Left ventricle myocardium superior (tissue), 1 donor: ENCODE measurements at regions of chr7 and their contacts with region 1.

Region 1: DNA sequence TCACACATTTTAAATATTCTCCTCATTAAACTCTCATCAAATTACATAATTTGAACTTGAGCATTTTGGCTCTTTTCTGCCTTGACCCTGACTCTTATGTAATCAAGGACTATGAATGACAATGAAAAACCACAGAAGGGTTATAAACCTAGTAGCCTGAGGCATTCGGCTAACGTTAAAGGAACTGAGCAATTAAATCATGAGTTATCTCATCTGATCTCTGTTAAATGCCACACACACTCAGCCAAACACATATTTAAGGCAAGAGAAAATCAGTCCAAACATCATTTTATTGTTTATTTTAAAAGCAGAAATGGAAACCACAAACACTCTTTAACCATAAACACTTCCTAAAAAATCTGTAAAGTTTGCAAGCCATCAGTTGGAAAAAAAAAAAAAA is 204.3 kb downstream of the DGKI start:
- DNase-seq: no peak
- ATAC-seq: no peak

Region 2: GRCh38 chr7:137328373-137329120 is 313.9 kb before region 1 on chr7:
- intact Hi-C with region 1: no loop called
- DNase-seq: no peak
- ATAC-seq: peak; percentile 77

Region 3: DNA sequence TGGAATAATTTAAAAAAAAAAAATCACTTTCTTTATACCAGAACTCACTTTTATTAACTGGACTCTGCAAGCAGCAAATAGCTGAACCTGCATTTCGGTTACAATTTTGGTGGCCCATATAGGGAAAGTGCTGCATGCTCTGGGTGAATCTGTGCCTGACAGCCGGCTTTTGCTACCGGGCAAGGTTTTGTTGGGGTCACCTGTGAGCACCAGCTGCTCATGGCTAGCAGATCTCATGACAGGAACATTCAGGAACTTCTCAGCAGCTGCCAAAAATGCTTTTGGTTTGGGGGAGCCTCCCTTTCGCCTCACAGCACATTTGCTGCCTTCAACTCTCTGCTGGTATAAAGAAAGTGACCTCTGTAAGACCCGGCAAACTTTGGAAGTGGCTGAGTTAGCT is 372.6 kb after region 1 on chr7:
- intact Hi-C with region 1: loop called (anchors 10 kb)
- DNase-seq: no peak
- ATAC-seq: no peak